Common myeloid progenitor, CD34-positive (primary cell): ENCODE measurements at regions of chr15 and their contacts with region 1.

Region 1: DNA sequence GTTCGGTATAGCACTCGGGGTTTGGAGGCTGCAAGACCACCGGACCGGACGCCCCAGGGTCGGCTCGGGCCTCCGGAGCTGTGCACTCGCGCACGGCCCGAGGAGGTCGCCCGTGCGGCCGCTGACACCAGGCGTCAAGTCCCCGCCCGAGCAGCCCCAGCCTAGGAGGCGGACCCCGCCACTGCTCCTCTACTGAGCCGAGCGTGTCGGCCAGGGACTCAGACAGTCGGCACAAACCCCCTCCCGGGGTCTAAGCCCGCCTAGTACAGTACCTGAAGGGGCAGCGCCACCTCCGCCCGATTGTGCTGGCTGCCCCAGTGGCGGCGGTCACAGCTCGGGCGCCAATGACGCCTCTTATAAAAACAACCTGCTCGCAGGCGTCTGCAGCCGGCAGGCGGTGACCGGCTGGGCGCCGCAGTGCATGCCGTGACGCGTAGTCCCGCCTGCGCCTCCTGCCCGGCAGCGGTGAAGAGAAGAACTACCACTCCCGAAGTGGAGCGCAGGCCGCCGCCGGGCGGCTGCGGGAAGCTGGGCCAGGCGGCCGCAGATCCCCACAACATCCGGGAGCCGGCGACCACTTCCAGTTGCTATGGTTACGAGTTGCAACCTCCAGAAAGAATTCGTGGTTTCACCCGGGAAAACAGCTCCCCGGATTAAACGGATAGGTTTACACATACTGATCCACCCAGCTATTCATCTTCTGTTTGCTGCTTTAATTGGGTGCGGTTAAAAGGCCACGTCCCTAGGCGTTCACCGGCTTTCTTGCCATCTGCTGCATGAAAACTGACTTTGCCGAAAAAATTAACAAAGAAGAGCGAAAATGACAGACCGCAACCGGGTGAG is at the starts of genes CCPG1 and PIERCE2:
- DNase-seq: peak; percentile 95 to 97 (median 96)
- H3K4me3 ChIP-seq: peak within 1 kb of the TSS; percentile 76 to 95 (median 92)
- H3K27ac ChIP-seq: peak within 1 kb of the TSS; percentile 56 to 91
- H3K4me1 ChIP-seq: peaks cover 14 to 50% (median 33%) of the 10 kb centered on the region in 4 experiments
- H3K27me3 ChIP-seq: no peaks in the 10 kb centered on the region

Region 2: GRCh38 chr15:55360256-55360655 is 47.9 kb before region 1 on chr15:
- CTCF ChIA-PET with region 1: interaction called, 20 read pairs
- POLR2A ChIA-PET with region 1: no interaction called
- DNase-seq: peak in 2 of 3 donors; percentile 21 to 26
- H3K4me3 ChIP-seq: no peak overlapping the region
- H3K27ac ChIP-seq: no peak overlapping the region
- H3K4me1 ChIP-seq: peaks cover 3 to 10% (median 5%) of the 10 kb centered on the region in 4 experiments
- H3K27me3 ChIP-seq: no peaks in the 10 kb centered on the region

Region 3: DNA sequence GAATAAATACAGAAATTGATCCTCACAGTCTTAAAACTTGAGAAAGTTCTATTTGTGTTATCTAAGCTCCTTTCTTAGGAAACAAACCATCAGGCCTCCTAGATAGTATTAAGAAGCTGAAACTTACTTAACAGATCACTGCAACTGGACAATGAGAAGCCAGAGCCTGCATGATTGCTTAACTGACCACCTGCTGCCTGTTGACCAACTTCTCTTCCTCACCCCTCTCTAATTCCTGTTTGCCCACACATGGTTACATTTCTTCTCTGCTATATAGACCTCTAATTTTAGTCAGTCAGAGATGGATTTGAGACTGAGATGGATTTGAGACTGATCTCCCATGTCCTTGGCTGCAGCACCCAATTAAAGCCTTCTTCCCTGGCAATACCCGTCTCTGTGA is 13.5 kb before region 1 on chr15:
- CTCF ChIA-PET with region 1: interaction called, 16 read pairs
- POLR2A ChIA-PET with region 1: interaction called, 3 read pairs
- DNase-seq: no peak
- H3K4me3 ChIP-seq: no peak overlapping the region
- H3K27ac ChIP-seq: no peak overlapping the region
- H3K4me1 ChIP-seq: peaks cover 0 to 2% (median under 1%) of the 10 kb centered on the region in 4 experiments
- H3K27me3 ChIP-seq: no peaks in the 10 kb centered on the region